HEK293 (cell line): ENCODE measurements at regions of chr14 and their contacts with region 1.

Region 1: GRCh38 chr14:100383727-100384158 is 60.6 kb downstream of the SLC25A47 start:
- H3K4me3 ChIP-seq: no peak overlapping the region
- H3K27ac ChIP-seq: no peak overlapping the region
- H3K4me1 ChIP-seq: peaks cover 14% of the 10 kb centered on the region
- CTCF ChIP-seq: peak; percentile 89

Region 2: DNA sequence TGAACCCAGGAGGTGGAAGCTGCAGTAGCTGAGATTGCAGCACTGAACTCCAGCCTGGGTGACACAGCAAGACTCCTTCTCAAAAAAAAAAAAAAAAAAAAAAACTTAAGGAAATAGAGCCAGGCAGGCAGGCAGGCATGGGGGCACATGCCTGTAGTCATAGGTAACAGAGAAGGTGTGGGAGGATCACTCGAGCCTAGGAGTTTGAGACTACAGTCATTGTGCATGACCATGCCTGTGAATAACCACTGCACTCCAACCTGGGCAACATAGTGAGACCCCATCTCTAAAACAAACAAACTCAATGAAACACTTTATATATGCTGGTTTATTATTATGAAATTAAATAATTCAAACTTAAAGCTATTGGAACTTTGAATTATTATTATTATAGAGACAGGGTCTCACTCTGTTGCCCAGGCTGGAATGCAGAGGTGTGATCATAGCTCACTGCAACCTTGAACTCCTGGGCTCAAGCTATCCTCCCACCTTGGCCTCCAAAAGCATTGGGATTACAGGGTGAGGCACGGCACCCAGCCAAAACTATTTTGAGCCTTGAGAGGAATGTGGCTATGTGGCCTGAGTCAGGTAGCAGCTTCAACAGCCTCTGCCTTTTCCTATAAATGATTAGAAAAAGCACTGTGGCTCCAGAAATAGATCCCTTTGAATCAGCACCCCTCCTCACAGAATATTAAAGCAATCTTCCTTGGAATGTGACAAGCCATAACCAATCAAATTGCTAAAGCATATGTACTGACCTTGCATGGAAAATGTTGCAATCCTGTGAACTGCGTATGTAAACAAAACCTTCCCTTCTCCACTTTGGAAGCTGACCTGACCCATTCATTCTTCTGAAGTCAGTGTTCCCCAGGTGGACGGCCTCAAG is 179.6 kb before region 1 on chr14:
- CTCF ChIA-PET with region 1: no interaction called
- POLR2A ChIA-PET with region 1: no interaction called
- H3K4me3 ChIP-seq: no peak overlapping the region
- H3K27ac ChIP-seq: no peak overlapping the region
- H3K4me1 ChIP-seq: no peaks in the 10 kb centered on the region
- CTCF ChIP-seq: no peak

Region 3: GRCh38 chr14:100346306-100347091 is 37.2 kb before region 1 on chr14:
- CTCF ChIA-PET with region 1: no interaction called
- POLR2A ChIA-PET with region 1: no interaction called
- H3K4me3 ChIP-seq: no peak overlapping the region
- H3K27ac ChIP-seq: no peak overlapping the region
- H3K4me1 ChIP-seq: no peaks in the 10 kb centered on the region
- CTCF ChIP-seq: no peak

Region 4: DNA sequence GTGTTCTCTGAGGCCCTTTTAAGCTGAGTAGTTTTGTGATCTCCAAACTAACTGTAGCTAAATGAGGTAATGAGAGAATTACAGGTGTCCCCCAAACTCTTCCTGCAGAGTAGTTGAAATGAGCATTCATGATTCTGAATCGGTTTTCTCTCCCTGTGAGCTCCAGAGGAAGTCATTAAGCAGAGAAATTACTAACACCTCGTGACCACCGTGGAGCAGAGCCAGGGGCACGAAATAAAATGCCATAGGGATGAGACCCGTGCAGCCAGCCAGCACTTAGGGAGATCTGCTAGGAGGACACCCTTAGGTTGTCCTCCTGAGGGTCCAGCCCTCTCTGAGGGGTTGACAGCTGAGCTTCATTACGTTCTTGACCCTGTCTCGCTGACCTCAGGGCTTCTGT is 18.9 kb after region 1 on chr14:
- CTCF ChIA-PET with region 1: interaction called, 12 read pairs
- POLR2A ChIA-PET with region 1: no interaction called
- H3K4me3 ChIP-seq: no peak overlapping the region
- H3K27ac ChIP-seq: no peak overlapping the region
- H3K4me1 ChIP-seq: no peaks in the 10 kb centered on the region
- CTCF ChIP-seq: no peak

Region 5: DNA sequence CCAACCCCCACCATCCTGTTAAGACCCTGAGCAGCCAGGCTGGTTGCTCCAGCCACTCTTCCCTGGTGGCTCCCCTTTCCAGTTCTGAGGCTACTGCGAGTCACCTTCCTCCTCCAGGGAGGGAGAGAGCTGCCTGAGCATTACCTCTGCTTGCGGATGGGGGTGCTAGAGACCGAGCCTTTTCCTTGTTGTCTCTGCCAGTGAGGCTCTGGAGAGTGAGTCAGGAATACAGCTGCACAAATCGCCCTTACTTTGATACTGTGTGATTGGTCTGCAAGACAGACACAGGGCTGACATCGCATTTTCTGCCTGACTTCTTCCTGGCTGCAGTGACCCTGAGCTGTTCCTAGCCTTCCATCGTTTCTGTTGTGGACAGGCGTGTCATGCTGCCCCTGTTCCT is 33.7 kb after region 1 on chr14:
- CTCF ChIA-PET with region 1: interaction called, 16 read pairs
- POLR2A ChIA-PET with region 1: no interaction called
- H3K4me3 ChIP-seq: no peak overlapping the region
- H3K27ac ChIP-seq: no peak overlapping the region
- H3K4me1 ChIP-seq: no peaks in the 10 kb centered on the region; the same call in 1 of the 2 replicates
- CTCF ChIP-seq: peak; percentile 61

Region 6: GRCh38 chr14:100581228-100582145 is 197.7 kb after region 1 on chr14:
- CTCF ChIA-PET with region 1: no interaction called
- POLR2A ChIA-PET with region 1: no interaction called
- H3K4me3 ChIP-seq: no peak overlapping the region
- H3K27ac ChIP-seq: no peak overlapping the region
- H3K4me1 ChIP-seq: no peaks in the 10 kb centered on the region
- CTCF ChIP-seq: no peak

Region 7: DNA sequence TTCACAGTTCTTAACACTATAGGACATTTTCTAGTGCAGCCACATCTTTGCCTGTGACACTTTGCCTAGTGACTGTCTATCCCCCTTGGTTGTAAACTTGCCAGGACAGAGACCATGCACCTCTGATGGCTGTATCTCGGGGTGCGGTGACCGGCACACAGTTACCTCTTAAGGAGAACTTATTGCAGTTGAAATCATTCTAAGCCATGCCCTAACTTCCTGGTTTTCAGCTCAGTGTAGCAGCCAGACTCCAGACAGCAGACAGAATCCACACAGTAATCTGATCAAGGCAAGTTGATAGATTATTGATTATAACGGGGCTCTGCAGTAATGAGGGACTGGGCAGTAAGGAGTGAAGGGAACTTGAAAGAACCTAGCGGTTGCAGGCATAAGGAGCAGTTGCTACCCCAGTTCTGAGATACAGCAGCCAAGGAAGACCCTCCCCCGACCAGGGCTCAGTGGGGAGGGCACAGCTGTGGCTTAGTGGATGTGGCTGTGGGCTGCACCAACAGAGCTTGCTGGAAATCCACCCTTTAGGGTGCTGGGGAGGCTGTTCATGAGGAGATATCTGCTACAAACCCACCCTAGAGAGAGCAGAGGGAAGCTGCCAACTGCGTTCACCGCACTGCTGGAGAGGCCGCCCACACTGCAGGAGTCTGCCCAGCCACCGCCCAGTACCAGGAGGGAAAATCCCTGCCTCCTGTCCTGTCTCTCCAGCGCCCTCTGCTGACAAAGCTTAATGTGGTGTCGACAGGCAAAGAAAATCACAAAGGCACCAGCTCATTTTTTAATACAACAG is 261.6 kb after region 1 on chr14:
- CTCF ChIA-PET with region 1: interaction called, 144 read pairs
- POLR2A ChIA-PET with region 1: interaction called, 3 read pairs
- H3K4me3 ChIP-seq: no peak overlapping the region
- H3K27ac ChIP-seq: no peak overlapping the region
- H3K4me1 ChIP-seq: peaks cover 2% of the 10 kb centered on the region; the same call in 1 of the 2 replicates
- CTCF ChIP-seq: peak; percentile 74

Region 8: DNA sequence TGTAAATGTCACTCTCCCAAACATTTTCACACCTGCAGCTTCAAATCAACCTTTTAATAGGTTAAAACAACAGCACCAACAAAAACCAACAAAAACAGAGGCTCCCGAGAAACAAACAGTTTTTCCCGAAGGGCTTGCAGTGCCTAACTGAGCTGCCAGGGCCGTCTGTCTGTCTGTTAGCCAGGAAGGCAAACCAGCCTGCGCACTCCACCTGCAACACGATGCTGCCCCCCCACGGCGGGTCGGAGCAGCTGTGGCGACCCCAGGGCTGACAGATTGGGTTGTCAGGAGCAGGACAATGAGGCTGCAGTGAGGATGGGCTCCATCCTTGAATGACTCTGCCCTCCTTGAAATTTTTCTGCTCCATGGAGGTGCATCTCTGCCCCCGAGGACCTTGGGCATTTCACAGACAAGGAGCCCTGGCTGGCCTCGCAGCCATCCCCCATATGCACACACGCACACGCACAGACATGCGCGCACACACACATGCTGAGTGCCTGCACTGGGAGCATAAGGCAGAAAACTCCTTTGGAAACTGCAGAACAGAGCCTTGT is 517.2 kb after region 1 on chr14:
- CTCF ChIA-PET with region 1: interaction called, 12 read pairs
- POLR2A ChIA-PET with region 1: no interaction called
- H3K4me3 ChIP-seq: no peak overlapping the region
- H3K27ac ChIP-seq: no peak overlapping the region
- H3K4me1 ChIP-seq: no peaks in the 10 kb centered on the region
- CTCF ChIP-seq: peak; percentile 56; the same call in 1 of the 2 replicates

Region 9: GRCh38 chr14:102344485-102344884 is 1960.7 kb after region 1 on chr14:
- CTCF ChIA-PET with region 1: no interaction called
- POLR2A ChIA-PET with region 1: no interaction called
- H3K4me3 ChIP-seq: no peak overlapping the region
- H3K27ac ChIP-seq: no peak overlapping the region
- H3K4me1 ChIP-seq: no peaks in the 10 kb centered on the region
- CTCF ChIP-seq: no peak